Activated T-helper 2 cell treated with anti-CD3 and anti-CD28 coated beads, Interferon-gamma antibody, Interleukin-2, Interleukin-4, amounts not matched to agents 10 μg/mL and 5 μg/mL and 100 μg/mL, durations not matched to agents 14 hours and 24 hours and 36 hours (primary cell): ENCODE measurements at regions of chr10 and their contacts with region 1.

Region 1: GRCh38 chr10:35341521-35341920 is 5.2 kb downstream of the CCNY start:
- DNase-seq: peak; percentile 19
- H3K4me3 Mint-ChIP-seq: peak overlapping the region; percentile 19
- H3K27ac Mint-ChIP-seq: peak overlapping the region; percentile 78
- H3K4me1 Mint-ChIP-seq: peaks cover 56% of the 10 kb centered on the region
- H3K27me3 Mint-ChIP-seq: no peaks in the 10 kb centered on the region

Region 2: GRCh38 chr10:35208536-35208935 is 133.0 kb before region 1 on chr10:
- intact Hi-C with region 1: no loop called
- DNase-seq: peak; percentile 64
- H3K4me3 Mint-ChIP-seq: peak overlapping the region; percentile 59
- H3K27ac Mint-ChIP-seq: peak overlapping the region; percentile 87
- H3K4me1 Mint-ChIP-seq: peaks cover 57% of the 10 kb centered on the region
- H3K27me3 Mint-ChIP-seq: no peaks in the 10 kb centered on the region

Region 3: GRCh38 chr10:35328404-35329037 is 13.0 kb before region 1 on chr10:
- intact Hi-C with region 1: loop called (anchors 1 kb)
- DNase-seq: no peak
- H3K4me3 Mint-ChIP-seq: no peak overlapping the region
- H3K27ac Mint-ChIP-seq: peak overlapping the region; percentile 46
- H3K4me1 Mint-ChIP-seq: peaks cover 22% of the 10 kb centered on the region
- H3K27me3 Mint-ChIP-seq: no peaks in the 10 kb centered on the region